RWPE1 (cell line): ENCODE measurements at regions of chr19 and their contacts with region 1.

Region 1: GRCh38 chr19:12664406-12665280 is 1.9 kb downstream of the MAN2B1 start:
- DNase-seq: no peak
- H3K27ac ChIP-seq: peak overlapping the region; percentile 87
- CTCF ChIP-seq: no peak

Region 2: DNA sequence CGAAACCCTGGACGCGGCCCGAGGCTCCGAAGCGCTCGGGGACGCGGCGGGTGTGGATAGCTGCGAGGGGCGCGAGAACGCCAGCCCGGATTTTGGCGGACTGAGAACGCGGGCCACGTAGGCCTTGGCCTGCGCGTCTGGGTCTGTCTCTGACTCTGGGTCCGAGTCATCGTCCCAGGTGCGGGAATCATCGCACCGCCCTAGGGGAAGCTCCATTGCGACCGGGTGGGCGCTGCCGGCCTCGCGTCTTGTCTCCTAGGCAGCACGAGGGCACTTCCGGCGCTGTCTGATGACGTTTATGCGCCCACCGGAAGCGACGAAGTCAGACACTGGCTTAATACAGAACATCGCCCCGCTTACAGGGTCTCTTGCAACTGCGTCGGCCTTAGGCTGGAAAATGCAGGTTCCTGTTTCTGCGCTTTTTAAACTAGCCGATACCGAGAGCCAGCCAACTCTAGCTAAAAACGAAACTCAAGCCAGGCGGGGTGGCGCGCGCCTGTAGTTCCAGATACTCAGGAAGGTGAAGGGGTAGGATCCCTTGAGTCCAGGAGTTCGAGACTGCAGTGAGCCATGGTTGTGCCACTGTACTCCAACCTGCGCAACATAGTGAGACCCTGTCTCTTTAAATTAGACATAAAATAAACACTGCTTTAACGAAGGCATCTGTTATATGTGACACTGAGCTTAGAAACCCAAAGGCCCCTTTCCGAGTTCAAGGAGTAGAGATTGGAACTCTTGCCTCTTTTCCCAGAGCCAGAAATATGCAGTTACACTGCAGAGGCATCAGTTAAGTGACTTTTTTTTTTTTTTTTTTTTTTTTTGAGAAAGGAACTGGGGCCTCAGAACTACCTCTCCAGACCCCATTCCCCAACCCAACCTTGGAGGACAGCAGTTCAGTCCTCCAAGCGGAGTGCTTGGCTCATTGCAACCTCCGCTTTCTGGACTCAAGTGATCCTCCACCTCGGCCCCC is 32.0 kb after region 1 on chr19 and contains the start of gene FBXW9:
- CTCF ChIA-PET with region 1: no interaction called
- POLR2A ChIA-PET with region 1: interaction called, 10 read pairs
- DNase-seq: peak; percentile 87
- H3K27ac ChIP-seq: peak within 1 kb of the TSS; percentile 86
- CTCF ChIP-seq: no peak

Region 3: GRCh38 chr19:12722566-12723380 is 58.1 kb after region 1 on chr19:
- CTCF ChIA-PET with region 1: no interaction called
- POLR2A ChIA-PET with region 1: no interaction called
- DNase-seq: peak; percentile 97
- H3K27ac ChIP-seq: peak overlapping the region; percentile 91
- CTCF ChIP-seq: no peak

Region 4: DNA sequence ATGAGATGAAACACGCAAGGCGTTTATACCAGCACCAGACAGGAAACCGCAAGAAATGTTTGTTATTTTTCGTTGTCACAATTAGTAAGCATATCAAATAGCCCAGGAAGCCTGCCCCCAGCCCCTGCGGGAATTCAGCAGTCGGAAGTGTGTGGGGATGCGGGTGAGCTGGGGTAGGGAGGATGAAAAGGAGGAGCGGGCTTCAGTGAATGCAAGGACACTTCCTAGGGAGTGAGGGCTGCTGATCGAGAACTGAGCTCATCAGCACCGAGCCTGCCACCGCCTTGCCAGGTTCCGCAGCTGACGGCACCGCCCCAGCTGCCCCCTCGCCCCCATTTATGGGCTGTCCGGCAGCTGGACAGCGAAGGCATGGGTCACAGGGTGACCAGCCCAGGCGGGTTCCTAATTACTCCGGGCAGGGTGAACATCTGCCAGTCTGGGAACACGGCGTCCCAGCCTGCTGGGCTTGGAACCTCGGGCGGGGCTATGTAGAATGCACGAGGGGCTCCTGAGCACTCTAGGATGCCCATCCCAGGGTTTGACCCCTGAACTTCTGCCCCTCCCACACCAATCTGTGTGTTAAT is 85.4 kb after region 1 on chr19:
- CTCF ChIA-PET with region 1: no interaction called
- POLR2A ChIA-PET with region 1: no interaction called
- DNase-seq: no peak
- H3K27ac ChIP-seq: peak overlapping the region; percentile 85
- CTCF ChIP-seq: no peak

Region 5: DNA sequence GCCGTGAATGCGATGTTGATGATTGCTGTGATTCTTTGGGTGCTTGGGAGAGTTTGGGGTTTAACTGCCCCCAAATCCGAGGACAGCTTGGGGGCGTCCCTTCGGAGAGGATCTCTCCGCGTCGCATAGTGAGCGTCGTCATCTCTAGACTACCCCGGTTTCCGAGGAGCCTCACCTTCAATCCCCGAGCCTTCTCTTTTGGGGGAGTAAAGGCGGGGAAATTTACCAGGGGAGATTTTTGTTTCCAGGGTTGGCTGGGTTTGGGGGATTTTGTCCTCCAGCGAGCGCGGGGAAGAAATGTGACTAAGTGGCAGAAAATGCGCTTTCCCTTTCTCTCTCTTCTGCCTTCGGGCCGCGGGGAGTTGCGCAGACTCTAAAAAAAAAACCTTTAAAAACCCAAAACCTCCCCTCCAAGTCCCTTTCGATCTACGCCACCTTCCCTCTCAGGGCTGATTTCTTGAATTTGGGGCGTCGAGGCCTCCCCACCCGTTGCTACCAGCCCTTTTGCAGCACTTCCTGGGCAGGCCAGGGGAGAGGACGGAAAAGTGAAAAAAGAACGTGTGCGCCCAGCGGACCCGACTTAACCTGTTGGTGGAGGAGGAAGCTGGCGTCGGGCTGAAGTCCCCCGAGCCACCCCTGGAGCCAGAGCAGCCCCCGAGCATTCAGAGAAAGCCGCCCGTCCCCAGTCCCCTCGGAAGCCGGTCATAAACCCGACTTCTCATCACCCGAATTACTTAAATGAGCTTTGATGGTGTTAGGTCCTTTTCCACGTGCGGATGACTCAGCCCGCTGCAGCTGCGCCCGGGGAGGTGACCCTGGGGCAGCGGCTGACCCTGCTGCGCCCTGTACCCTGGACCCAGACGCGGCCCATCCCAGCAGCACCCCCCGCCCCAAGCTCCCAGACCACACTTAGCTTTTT is 348.3 kb after region 1 on chr19:
- CTCF ChIA-PET with region 1: no interaction called
- POLR2A ChIA-PET with region 1: no interaction called
- DNase-seq: peak; percentile 79
- H3K27ac ChIP-seq: peak overlapping the region; percentile 98
- CTCF ChIP-seq: no peak